CD8-positive, alpha-beta memory T cell (primary cell): ENCODE measurements at regions of chr17 and their contacts with region 1.

Region 1: GRCh38 chr17:78231991-78232858 is 794 bp downstream of the TMEM235 start:
- DNase-seq: no peak
- H3K4me3 ChIP-seq: no peak overlapping the region
- H3K4me3 Mint-ChIP-seq: peak overlapping the region in 1 of 7 donors; percentile 14
- H3K27ac ChIP-seq: no peak overlapping the region
- H3K27ac Mint-ChIP-seq: no peak overlapping the region
- H3K4me1 ChIP-seq: no peaks in the 10 kb centered on the region
- H3K4me1 Mint-ChIP-seq: peaks cover 3 to 13% (median 5%) of the 10 kb centered on the region in 3 donors
- H3K27me3 ChIP-seq: peaks cover 12% of the 10 kb centered on the region
- H3K27me3 Mint-ChIP-seq: peaks cover 27 to 36% of the 10 kb centered on the region in 2 donors

Region 2: DNA sequence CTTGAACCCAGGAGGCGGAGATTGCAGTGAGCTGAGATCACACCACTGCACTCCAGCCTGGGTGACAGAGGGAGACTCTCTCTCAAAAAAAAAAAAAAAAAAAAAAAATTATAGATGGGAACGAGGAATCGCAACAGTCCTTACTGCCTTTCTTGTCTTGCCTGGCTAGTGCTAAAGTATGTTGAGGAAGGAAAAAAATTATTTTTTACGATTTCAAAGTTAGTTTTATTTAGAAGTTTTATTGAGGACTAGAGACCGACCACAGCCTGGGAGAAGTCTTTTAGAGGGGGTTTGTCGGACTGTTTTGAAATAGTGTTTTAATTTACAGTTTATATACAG is 360.7 kb after region 1 on chr17:
- CTCF ChIA-PET with region 1: no interaction called
- POLR2A ChIA-PET with region 1: interaction called, 15 read pairs
- DNase-seq: no peak
- H3K4me3 ChIP-seq: no peak overlapping the region
- H3K4me3 Mint-ChIP-seq: no peak overlapping the region
- H3K27ac ChIP-seq: no peak overlapping the region
- H3K27ac Mint-ChIP-seq: no peak overlapping the region
- H3K4me1 ChIP-seq: peaks cover 4% of the 10 kb centered on the region
- H3K4me1 Mint-ChIP-seq: peaks cover 6% of the 10 kb centered on the region in 3 donors
- H3K27me3 ChIP-seq: no peaks in the 10 kb centered on the region
- H3K27me3 Mint-ChIP-seq: peaks cover 7 to 44% of the 10 kb centered on the region in 2 donors